ENCODE measurements at regions of chr3 and their contacts with region 1.

Region 1: GRCh38 chr3:108489771-108490170 is 20.6 kb downstream of the MYH15 start:
- DNase-seq: peak; percentile 45
- H3K4me3 ChIP-seq: no peak overlapping the region; a peak in 1 of 4 replicates
- H3K27ac ChIP-seq: no peak overlapping the region
- H3K4me1 ChIP-seq: peaks cover 18 to 29% of the 10 kb centered on the region in 2 experiments
- H3K27me3 ChIP-seq: no peaks in the 10 kb centered on the region
- CTCF ChIP-seq: peak; percentile 78
- EP300 ChIP-seq: no peak
- RAD21 ChIP-seq: peak; percentile 97

Region 2: DNA sequence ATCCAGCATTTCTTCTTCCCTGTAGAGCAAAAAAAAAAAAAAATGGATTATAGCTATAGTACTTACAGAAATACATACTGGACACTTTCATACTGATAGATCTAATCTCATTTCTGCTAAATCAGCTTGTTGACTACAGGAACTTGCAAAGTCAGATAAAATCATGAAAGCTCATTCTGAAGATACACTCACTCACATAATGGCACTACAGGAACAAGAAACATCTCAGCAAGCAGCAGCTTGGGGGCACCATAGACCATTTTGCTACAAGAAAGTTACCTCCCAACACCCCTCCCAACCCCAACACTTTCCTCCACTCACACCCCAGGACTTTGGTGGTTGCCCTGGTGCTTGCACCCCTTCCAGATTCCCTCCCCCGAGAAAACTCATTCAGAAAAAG is 16.0 kb after region 1 on chr3:
- CTCF ChIA-PET with region 1: interaction called, 40 read pairs
- POLR2A ChIA-PET with region 1: no interaction called
- DNase-seq: no peak
- H3K4me3 ChIP-seq: no peak overlapping the region
- H3K27ac ChIP-seq: no peak overlapping the region
- H3K4me1 ChIP-seq: peaks cover 0 to 18% of the 10 kb centered on the region in 2 experiments; a peak in 2 of 4 replicates
- H3K27me3 ChIP-seq: no peaks in the 10 kb centered on the region
- CTCF ChIP-seq: no peak; the same call in 1 of the 2 replicates
- EP300 ChIP-seq: no peak
- RAD21 ChIP-seq: peak; percentile 50

Region 3: DNA sequence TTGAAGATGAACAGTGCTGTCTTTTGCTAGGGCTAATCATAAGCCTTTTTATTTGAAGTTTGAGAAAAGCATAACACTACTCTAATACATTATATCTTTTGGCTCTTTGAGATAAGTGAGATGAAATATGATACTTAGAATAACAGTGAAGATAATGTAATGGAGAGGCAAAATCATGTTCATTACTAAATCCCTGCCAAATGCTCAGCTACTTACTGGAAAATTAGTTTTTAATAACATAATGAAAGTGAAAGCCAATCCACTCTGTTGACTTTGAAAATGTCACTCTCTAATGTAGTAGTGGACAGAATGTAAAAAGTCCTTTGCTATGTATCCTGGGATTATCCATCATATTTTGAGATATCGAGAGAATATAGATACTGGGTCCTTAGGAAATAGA is 56.5 kb after region 1 on chr3:
- CTCF ChIA-PET with region 1: interaction called, 233 read pairs
- POLR2A ChIA-PET with region 1: no interaction called
- DNase-seq: no peak
- H3K4me3 ChIP-seq: peak overlapping the region in 1 of 2 experiments; percentile 19; a peak in 1 of 4 replicates
- H3K27ac ChIP-seq: peak overlapping the region; percentile 0 to 16; a peak in 2 of 4 replicates
- H3K4me1 ChIP-seq: peaks cover 0 to 2% of the 10 kb centered on the region in 2 experiments; a peak in 2 of 4 replicates
- H3K27me3 ChIP-seq: no peaks in the 10 kb centered on the region
- CTCF ChIP-seq: no peak
- EP300 ChIP-seq: no peak
- RAD21 ChIP-seq: no peak

Region 4: DNA sequence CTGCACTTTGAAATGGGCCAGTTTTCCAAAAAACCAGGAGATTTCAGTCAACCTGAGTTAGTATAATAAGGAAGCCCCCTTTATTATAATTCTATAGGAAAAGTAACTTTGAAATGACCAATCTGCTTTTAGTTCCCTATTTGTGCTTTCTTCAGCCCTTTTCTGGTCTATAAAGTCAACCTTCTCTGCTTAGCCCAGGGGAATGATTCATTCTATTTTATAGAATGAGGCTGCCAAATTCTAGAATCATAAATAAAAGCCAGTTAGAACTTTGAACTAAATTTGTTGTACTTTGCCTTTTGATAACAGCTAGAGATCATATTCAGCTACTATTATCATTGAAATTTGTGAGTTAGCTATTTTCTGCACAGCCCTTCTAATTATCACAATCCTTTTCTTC is 74.8 kb after region 1 on chr3:
- CTCF ChIA-PET with region 1: interaction called, 17 read pairs
- POLR2A ChIA-PET with region 1: no interaction called
- DNase-seq: no peak
- H3K4me3 ChIP-seq: no peak overlapping the region
- H3K27ac ChIP-seq: peak overlapping the region in 1 of 2 experiments; percentile 16; a peak in 1 of 4 replicates
- H3K4me1 ChIP-seq: no peaks in the 10 kb centered on the region; a peak in 1 of 4 replicates
- H3K27me3 ChIP-seq: no peaks in the 10 kb centered on the region
- CTCF ChIP-seq: no peak
- EP300 ChIP-seq: no peak
- RAD21 ChIP-seq: no peak

Region 5: DNA sequence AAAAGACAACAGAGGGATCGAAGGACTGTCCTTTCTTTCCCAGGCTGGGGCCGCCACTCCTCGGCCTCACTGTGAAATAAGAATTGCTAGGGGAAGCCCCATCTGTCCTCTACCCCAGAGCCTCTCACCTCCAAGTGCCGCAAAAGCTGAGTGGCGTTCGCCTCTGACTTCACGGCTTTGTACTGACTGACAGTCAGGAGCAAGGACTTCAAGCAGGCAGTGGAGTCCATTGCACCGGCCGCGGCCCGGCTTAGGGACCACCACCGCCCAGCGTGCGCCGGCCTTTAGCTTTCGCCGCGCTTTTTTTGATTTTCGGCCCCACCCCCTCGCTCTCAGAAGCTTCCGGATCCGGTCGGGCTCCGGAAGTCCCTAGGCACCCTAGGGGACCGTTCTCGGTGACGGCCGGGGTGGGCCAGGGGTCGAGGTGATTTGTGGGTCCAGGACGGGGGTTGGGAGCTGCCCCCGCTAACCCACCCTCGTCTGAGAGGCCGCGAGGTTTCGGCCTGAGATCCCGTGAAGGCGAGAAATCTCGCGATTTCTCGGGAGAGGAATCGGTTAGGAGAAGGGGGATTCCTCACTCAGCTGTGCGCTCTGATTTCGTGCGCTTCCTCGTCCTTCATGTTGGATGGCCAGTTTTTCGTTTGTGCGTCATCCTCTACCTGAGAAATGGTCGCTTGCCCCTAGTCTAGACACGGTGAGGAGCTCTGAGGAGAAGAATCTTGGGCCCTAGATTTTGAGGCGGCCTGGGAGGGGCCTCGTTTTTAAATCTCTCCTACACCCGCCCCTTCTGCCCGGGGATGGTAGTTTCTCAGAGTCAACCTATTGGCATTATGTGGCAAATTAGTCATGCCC is 99.6 kb after region 1 on chr3 and contains the starts of genes CIP2A and DZIP3:
- CTCF ChIA-PET with region 1: interaction called, 11 read pairs
- POLR2A ChIA-PET with region 1: interaction called, 3 read pairs
- DNase-seq: peak; percentile 95
- H3K4me3 ChIP-seq: peak within 1 kb of the TSS; percentile 85 to 98
- H3K27ac ChIP-seq: peak within 1 kb of the TSS; percentile 94 to 99
- H3K4me1 ChIP-seq: peaks cover 0 to 10% of the 10 kb centered on the region in 2 experiments; a peak in 3 of 4 replicates
- H3K27me3 ChIP-seq: no peaks in the 10 kb centered on the region
- CTCF ChIP-seq: no peak
- EP300 ChIP-seq: peak; percentile 19 to 39; a peak in 1 of 4 replicates
- RAD21 ChIP-seq: no peak
- polyA plus RNA-seq, gene CIP2A: 6.9 and 7.1 TPM in 2 replicates
- polyA plus RNA-seq, gene DZIP3: 6.3 and 9.2 TPM in 2 replicates

Region 6: GRCh38 chr3:109050591-109051167 is 560.9 kb after region 1 on chr3:
- CTCF ChIA-PET with region 1: no interaction called
- POLR2A ChIA-PET with region 1: no interaction called
- DNase-seq: peak; percentile 20
- H3K4me3 ChIP-seq: peak overlapping the region in 1 of 2 experiments; percentile 29; a peak in 1 of 4 replicates
- H3K27ac ChIP-seq: no peak overlapping the region
- H3K4me1 ChIP-seq: no peaks in the 10 kb centered on the region
- H3K27me3 ChIP-seq: no peaks in the 10 kb centered on the region
- CTCF ChIP-seq: peak; percentile 78
- EP300 ChIP-seq: no peak
- RAD21 ChIP-seq: peak; percentile 49